ENCODE measurements at regions of chr9 and their contacts with region 1.

Region 1: GRCh38 chr9:112333639-112334431 is 416 bp upstream of the PTBP3 start:
- DNase-seq: peak; percentile 89 to 98 (median 94)
- ATAC-seq: peak; percentile 83
- H3K4me3 ChIP-seq: peak overlapping the region; percentile 87 to 99
- H3K4me3 Mint-ChIP-seq: peak overlapping the region; percentile 79
- H3K27ac ChIP-seq: peak overlapping the region; percentile 88 to 93
- H3K27ac Mint-ChIP-seq: peak overlapping the region; percentile 92
- H3K4me1 ChIP-seq: peaks cover 30% of the 10 kb centered on the region
- H3K4me1 Mint-ChIP-seq: peaks cover 38% of the 10 kb centered on the region
- H3K27me3 ChIP-seq: no peaks in the 10 kb centered on the region
- H3K27me3 Mint-ChIP-seq: no peaks in the 10 kb centered on the region
- CTCF ChIP-seq: peak; percentile 20

Region 2: GRCh38 chr9:111483862-111484571 is 849.8 kb before region 1 on chr9 and contains the start of gene ECPAS:
- CTCF ChIA-PET with region 1: no interaction called
- POLR2A ChIA-PET with region 1: no interaction called
- intact Hi-C with region 1: loop called (anchors 2 to 5 kb)
- DNase-seq: peak; percentile 35 to 79 (median 63)
- ATAC-seq: peak; percentile 64
- H3K4me3 ChIP-seq: peak within 1 kb of the TSS; percentile 90 to 99
- H3K4me3 Mint-ChIP-seq: peak within 1 kb of the TSS; percentile 86
- H3K27ac ChIP-seq: peak within 1 kb of the TSS; percentile 81 to 85
- H3K27ac Mint-ChIP-seq: peak within 1 kb of the TSS; percentile 81
- H3K4me1 ChIP-seq: peaks cover 7% of the 10 kb centered on the region
- H3K4me1 Mint-ChIP-seq: peaks cover 29% of the 10 kb centered on the region
- H3K27me3 ChIP-seq: no peaks in the 10 kb centered on the region
- H3K27me3 Mint-ChIP-seq: no peaks in the 10 kb centered on the region
- CTCF ChIP-seq: no peak
- total RNA-seq, gene ECPAS: 36.4 to 44.6 TPM

Region 3: GRCh38 chr9:111805830-111806241 is 528.0 kb before region 1 on chr9:
- CTCF ChIA-PET with region 1: no interaction called
- POLR2A ChIA-PET with region 1: no interaction called
- intact Hi-C with region 1: no loop called
- DNase-seq: no peak
- ATAC-seq: no peak
- H3K4me3 ChIP-seq: no peak overlapping the region
- H3K4me3 Mint-ChIP-seq: no peak overlapping the region
- H3K27ac ChIP-seq: no peak overlapping the region
- H3K27ac Mint-ChIP-seq: no peak overlapping the region
- H3K4me1 ChIP-seq: no peaks in the 10 kb centered on the region
- H3K4me1 Mint-ChIP-seq: peaks cover 9% of the 10 kb centered on the region
- H3K27me3 ChIP-seq: no peaks in the 10 kb centered on the region
- H3K27me3 Mint-ChIP-seq: no peaks in the 10 kb centered on the region
- CTCF ChIP-seq: no peak

Region 4: DNA sequence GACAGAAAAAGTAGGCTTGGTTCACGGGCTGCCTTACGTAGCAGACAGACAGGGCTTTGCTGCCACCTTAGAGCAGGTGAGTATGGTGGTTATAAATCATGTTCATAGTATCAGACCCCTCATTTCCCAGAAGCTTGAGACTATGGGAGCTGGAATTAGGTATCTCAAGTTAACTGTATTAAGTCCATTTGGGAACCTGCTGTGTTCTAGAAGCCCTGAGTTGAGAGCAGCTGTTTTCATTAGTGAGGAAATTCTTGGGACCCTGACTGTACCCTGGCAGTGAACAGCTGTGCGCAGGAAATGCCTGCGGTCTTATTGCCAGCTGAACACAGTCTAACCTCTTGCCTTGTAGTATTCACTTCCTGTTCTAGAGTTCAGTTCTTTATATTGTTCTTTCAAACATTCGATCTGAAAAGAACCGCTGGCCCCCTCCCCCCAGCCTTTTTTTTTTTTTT is 407.4 kb before region 1 on chr9:
- CTCF ChIA-PET with region 1: no interaction called
- POLR2A ChIA-PET with region 1: interaction called, 3 read pairs
- intact Hi-C with region 1: loop called in 1 of 2 experiments (anchors 10 kb)
- DNase-seq: peak; percentile 8 to 83 (median 60)
- ATAC-seq: peak; percentile 94
- H3K4me3 ChIP-seq: peak overlapping the region in 1 of 2 experiments; percentile 36
- H3K4me3 Mint-ChIP-seq: peak overlapping the region; percentile 69
- H3K27ac ChIP-seq: peak overlapping the region; percentile 54 to 67
- H3K27ac Mint-ChIP-seq: peak overlapping the region; percentile 90
- H3K4me1 ChIP-seq: peaks cover 34% of the 10 kb centered on the region
- H3K4me1 Mint-ChIP-seq: peaks cover 43% of the 10 kb centered on the region
- H3K27me3 ChIP-seq: no peaks in the 10 kb centered on the region
- H3K27me3 Mint-ChIP-seq: no peaks in the 10 kb centered on the region
- CTCF ChIP-seq: no peak

Region 5: GRCh38 chr9:112249277-112249676 is 84.6 kb before region 1 on chr9:
- CTCF ChIA-PET with region 1: no interaction called
- POLR2A ChIA-PET with region 1: no interaction called
- intact Hi-C with region 1: loop called in 1 of 2 experiments (anchors 5 kb)
- DNase-seq: no peak
- ATAC-seq: no peak
- H3K4me3 ChIP-seq: no peak overlapping the region
- H3K4me3 Mint-ChIP-seq: no peak overlapping the region
- H3K27ac ChIP-seq: no peak overlapping the region
- H3K27ac Mint-ChIP-seq: no peak overlapping the region
- H3K4me1 ChIP-seq: no peaks in the 10 kb centered on the region
- H3K4me1 Mint-ChIP-seq: peaks cover 23% of the 10 kb centered on the region
- H3K27me3 ChIP-seq: no peaks in the 10 kb centered on the region
- H3K27me3 Mint-ChIP-seq: no peaks in the 10 kb centered on the region
- CTCF ChIP-seq: no peak

Region 6: DNA sequence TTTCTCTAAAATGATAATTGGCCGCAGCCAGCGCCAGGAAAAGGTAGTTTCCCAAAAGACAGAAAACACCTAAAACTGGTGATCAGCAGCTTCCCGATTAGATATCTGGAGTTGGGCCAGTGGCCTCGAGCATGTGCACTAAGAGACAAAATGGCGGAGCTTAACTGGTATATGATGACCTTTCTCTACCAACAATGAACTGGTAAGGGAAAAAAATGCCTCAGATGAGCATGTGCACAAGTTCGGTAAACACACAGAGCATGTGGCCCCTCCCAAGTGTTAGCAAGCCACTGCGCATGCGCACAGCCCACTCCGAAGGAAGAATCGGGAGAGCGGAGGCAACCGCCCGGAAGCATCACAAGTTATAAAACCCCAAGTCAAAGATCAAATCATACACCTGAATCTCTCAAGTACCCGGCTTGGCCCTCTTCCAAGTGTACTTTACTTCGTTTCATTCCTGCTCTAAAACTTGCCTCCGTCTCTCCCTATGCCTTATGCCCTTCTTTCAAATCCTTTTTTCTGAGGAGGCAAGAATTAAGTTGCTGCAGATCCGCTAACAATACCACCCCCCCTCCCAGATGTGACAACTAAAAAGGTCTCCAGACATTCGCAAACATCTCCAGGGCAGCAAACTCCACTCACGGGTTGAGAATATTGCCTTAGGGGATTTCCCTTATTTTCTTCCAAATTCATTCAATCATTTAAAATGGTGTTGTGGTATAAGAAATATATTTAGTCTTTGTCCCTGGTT is 14.6 kb after region 1 on chr9:
- CTCF ChIA-PET with region 1: no interaction called
- POLR2A ChIA-PET with region 1: interaction called, 3 read pairs
- intact Hi-C with region 1: loop called (anchors 1 to 2 kb)
- DNase-seq: peak; percentile 19 to 82 (median 68)
- ATAC-seq: peak; percentile 40
- H3K4me3 ChIP-seq: peak overlapping the region; percentile 2 to 21
- H3K4me3 Mint-ChIP-seq: peak overlapping the region; percentile 72
- H3K27ac ChIP-seq: no peak overlapping the region
- H3K27ac Mint-ChIP-seq: no peak overlapping the region
- H3K4me1 ChIP-seq: peaks cover 3% of the 10 kb centered on the region
- H3K4me1 Mint-ChIP-seq: peaks cover 10% of the 10 kb centered on the region
- H3K27me3 ChIP-seq: peaks cover 0 to 2% of the 10 kb centered on the region in 2 experiments
- H3K27me3 Mint-ChIP-seq: peaks cover 2% of the 10 kb centered on the region
- CTCF ChIP-seq: no peak

Region 7: DNA sequence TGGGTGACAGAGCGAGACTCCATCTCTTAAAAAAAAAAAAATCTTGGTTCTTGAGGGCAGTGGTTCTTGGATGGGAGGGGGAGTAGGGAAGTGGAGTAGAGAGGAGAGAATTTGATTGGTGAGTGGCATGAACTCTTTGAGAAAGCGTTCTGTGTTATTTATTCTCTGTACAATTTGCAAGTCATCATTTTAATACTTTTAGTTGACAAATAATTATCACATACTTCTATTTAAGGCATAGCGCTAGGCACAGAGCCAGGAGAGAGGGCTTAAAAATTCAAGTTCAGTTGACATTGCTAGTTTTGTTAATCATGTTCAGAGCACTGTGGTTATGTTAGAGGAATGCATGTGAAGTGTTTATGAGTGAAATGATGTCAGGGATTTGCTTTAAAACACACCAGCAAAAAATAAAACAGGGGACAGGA is 70.7 kb after region 1 on chr9:
- CTCF ChIA-PET with region 1: no interaction called
- POLR2A ChIA-PET with region 1: no interaction called
- intact Hi-C with region 1: no loop called
- DNase-seq: no peak
- ATAC-seq: no peak
- H3K4me3 ChIP-seq: no peak overlapping the region
- H3K4me3 Mint-ChIP-seq: no peak overlapping the region
- H3K27ac ChIP-seq: no peak overlapping the region
- H3K27ac Mint-ChIP-seq: no peak overlapping the region
- H3K4me1 ChIP-seq: no peaks in the 10 kb centered on the region
- H3K4me1 Mint-ChIP-seq: no peaks in the 10 kb centered on the region
- H3K27me3 ChIP-seq: no peaks in the 10 kb centered on the region
- H3K27me3 Mint-ChIP-seq: no peaks in the 10 kb centered on the region
- CTCF ChIP-seq: no peak

Region 8: GRCh38 chr9:112717661-112718341 is 384.0 kb after region 1 on chr9 and contains the start of gene INIP:
- CTCF ChIA-PET with region 1: no interaction called
- POLR2A ChIA-PET with region 1: interaction called, 5 read pairs
- intact Hi-C with region 1: loop called (anchors 1 to 2 kb)
- DNase-seq: peak; percentile 94 to 99 (median 97)
- ATAC-seq: peak; percentile 90
- H3K4me3 ChIP-seq: peak within 1 kb of the TSS; percentile 83 to 97
- H3K4me3 Mint-ChIP-seq: peak within 1 kb of the TSS; percentile 94
- H3K27ac ChIP-seq: peak within 1 kb of the TSS; percentile 95 to 96
- H3K27ac Mint-ChIP-seq: peak within 1 kb of the TSS; percentile 98
- H3K4me1 ChIP-seq: peaks cover 15% of the 10 kb centered on the region
- H3K4me1 Mint-ChIP-seq: peaks cover 30% of the 10 kb centered on the region
- H3K27me3 ChIP-seq: no peaks in the 10 kb centered on the region
- H3K27me3 Mint-ChIP-seq: no peaks in the 10 kb centered on the region
- CTCF ChIP-seq: no peak
- total RNA-seq, gene INIP: 11.7 to 17.2 TPM

Measured in CD8-positive, alpha-beta T cell (primary cell).